ENCODE measurements at regions of chr5 and their contacts with region 1.

Region 1: DNA sequence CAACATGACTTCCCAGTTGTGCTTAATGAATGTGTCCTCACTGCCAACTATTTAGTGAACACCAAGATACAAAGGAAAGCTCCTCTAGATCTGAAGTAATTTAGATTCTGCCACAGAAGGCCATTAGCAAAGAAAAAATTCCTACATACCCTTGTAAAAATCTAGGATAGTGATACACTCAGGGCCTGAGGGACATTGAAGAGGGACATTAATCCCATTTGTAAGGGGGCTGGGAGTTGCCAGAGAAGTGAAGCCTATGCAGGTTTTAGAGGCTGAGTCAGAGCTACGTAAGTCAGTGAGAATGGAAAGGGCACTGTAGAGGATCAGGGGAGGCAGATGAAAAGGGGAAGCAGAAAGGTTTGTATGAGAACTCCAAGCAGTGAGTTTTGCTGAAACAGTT is 286.9 kb upstream of the TARS1 start:
- DNase-seq: no peak
- H3K4me3 ChIP-seq: no peak overlapping the region
- H3K27ac ChIP-seq: no peak overlapping the region
- H3K4me1 ChIP-seq: no peaks in the 10 kb centered on the region
- H3K27me3 ChIP-seq: no peaks in the 10 kb centered on the region
- CTCF ChIP-seq: no peak
- EP300 ChIP-seq: no peak
- POLR2A ChIP-seq: no peak

Region 2: GRCh38 chr5:32261198-32261597 is 892.6 kb before region 1 on chr5:
- intact Hi-C with region 1: no loop called
- DNase-seq: no peak
- H3K4me3 ChIP-seq: no peak overlapping the region
- H3K27ac ChIP-seq: peak overlapping the region; percentile 52 to 55
- H3K4me1 ChIP-seq: peaks cover 3% of the 10 kb centered on the region
- H3K27me3 ChIP-seq: no peaks in the 10 kb centered on the region
- CTCF ChIP-seq: no peak
- EP300 ChIP-seq: no peak
- POLR2A ChIP-seq: no peak

Region 3: DNA sequence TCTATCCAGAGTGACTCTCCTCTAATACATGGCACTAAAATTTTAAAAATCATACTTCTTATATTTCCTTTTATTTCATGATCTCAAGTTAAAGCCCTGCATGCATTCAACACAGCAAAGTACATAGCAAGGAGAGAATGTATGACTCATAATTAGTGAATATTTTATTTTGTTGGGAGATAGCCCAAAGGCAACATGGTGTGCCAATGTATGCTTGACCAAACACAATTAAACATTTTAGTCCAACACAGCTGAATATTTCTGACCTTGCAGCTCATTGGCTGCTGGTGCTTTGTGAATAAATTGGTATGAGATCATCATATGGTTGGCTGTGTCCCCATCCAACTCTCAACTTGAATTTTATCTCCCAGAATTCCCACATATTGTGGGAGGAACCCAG is 339.2 kb before region 1 on chr5:
- intact Hi-C with region 1: no loop called
- DNase-seq: no peak
- H3K4me3 ChIP-seq: no peak overlapping the region
- H3K27ac ChIP-seq: no peak overlapping the region
- H3K4me1 ChIP-seq: peaks cover 7% of the 10 kb centered on the region
- H3K27me3 ChIP-seq: no peaks in the 10 kb centered on the region
- CTCF ChIP-seq: no peak
- EP300 ChIP-seq: no peak
- POLR2A ChIP-seq: no peak

Region 4: DNA sequence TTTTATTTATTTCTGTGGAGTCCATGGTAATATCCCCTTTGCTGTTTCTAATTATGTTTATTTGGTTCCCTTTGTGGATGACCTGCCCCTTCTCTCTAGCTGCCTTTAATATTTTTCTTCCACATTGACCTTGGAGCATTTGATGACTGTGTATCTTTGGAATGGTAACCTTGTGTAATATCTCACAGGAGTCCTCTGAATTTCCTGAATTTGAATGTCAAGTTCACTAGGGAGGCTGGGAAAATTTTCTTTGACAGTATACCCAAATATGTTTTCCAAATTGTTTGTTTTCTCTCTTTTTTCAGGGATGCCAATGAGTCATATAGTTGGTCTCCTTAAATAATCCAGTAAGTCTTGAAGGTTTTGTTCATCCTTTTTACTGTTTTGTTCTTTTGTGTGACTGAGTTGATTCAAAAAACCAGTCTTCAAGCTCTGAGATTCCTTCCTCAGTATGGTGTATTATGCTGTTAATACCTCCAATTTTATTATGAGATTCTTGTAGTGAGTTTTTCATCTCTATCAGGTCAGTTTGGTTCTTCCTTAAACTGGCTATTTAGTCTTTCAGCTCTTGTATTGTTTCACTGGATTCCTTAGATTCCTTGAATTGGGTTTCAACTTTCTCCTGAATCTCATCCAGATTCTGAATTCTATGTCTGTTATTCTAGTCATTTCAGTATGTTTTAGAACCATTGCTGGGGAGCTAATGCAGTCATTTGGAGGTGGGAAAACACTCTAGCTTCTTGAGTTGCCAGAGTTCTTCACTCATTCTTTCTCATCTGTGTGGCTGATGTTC is 62.1 kb before region 1 on chr5:
- intact Hi-C with region 1: no loop called
- DNase-seq: no peak
- H3K4me3 ChIP-seq: no peak overlapping the region
- H3K27ac ChIP-seq: no peak overlapping the region
- H3K4me1 ChIP-seq: no peaks in the 10 kb centered on the region
- H3K27me3 ChIP-seq: no peaks in the 10 kb centered on the region
- CTCF ChIP-seq: no peak
- EP300 ChIP-seq: no peak
- POLR2A ChIP-seq: no peak

Region 5: GRCh38 chr5:33143405-33144123 is 10.3 kb before region 1 on chr5:
- intact Hi-C with region 1: loop called in 1 of 4 experiments (anchors 1 kb)
- DNase-seq: no peak
- H3K4me3 ChIP-seq: no peak overlapping the region
- H3K27ac ChIP-seq: no peak overlapping the region
- H3K4me1 ChIP-seq: no peaks in the 10 kb centered on the region
- H3K27me3 ChIP-seq: no peaks in the 10 kb centered on the region
- CTCF ChIP-seq: no peak
- EP300 ChIP-seq: no peak
- POLR2A ChIP-seq: no peak

Region 6: DNA sequence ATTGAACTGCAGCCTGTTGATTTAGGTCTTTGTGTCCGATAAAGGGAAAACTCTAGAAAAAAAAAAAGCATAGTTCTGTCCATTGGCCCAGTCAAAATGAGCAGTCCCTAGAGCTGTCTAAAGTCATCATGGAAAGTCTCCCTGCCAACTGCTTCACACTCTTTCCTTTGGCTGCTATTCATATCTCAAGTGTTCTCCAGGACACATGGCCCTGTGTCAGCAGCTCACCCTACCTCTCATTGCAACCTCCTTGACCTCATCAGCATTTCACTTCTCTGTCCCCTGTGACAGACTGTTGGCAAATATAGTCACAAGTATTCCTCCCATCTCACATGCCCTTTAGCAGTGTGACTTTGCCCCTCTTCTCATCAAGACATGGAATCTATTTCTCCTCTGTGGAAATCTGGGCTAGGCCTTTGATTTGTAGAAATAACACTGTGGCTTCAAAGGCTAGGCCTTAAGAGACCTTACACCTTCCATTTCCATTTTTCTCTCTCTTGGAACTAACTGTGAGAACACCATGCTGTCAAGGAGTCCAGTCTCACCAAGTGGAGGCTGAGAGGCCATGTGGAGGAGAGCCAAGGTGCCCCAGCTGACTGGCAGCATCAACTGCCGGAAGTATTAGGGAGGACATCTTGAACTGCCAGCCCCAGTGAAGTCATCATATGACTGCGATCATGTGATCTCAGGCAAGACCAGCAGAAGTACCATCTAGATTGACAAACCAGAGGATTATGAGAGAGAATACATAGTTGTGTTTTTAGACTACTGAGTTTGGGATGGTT is 137.6 kb after region 1 on chr5:
- intact Hi-C with region 1: no loop called
- DNase-seq: no peak
- H3K4me3 ChIP-seq: no peak overlapping the region
- H3K27ac ChIP-seq: no peak overlapping the region
- H3K4me1 ChIP-seq: no peaks in the 10 kb centered on the region
- H3K27me3 ChIP-seq: no peaks in the 10 kb centered on the region
- CTCF ChIP-seq: no peak
- EP300 ChIP-seq: no peak
- POLR2A ChIP-seq: no peak

Measured in ovary (tissue), 10 donors.